ENCODE measurements at regions of chr3 and their contacts with region 1.

Region 1: DNA sequence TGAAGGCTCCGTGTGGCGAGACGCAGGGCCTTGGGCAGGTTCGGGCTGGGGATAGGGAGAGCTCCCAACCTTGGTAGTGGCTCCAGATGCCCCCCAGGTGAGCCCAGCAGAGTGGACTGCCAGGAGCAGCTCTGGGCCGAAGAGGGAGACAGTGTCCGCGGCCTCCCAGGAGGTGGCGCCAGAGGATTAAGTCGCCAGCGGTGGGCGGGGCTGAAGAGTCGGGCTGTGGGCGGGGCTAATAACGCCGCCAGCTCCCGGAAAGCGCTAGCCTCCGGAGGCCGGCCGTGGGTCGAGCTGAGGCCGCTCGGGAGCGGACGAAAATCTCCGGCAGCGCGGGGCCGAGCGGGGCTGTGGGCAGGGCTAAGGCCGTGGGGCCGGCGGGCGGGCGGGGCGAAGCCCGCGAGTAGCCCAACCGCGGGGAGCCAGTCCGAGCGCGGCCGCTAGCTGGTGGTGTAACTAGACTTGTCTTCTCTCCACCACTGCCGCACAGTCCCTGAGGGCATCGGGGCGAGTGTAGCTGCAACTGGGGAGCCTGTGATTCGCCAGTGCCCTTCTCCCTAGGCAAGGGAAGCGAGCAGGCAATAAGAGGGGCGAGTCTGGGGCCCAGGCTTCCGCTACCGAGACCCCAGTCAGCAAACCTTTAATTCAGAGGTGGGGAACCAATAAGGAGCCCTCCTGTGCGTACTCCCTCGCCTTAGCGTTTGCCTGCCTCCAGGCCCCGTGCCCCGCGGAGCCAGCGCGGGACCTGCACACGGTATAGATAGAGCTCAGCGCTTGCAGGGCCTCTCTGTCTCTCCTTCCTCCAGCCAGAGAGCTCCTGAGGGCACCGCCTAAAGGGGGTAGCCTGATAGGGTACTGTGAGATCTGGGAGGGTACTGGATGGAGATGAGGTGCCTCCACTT is 14.4 kb upstream of the BSN start:
- DNase-seq: peak; percentile 93
- H3K4me3 Mint-ChIP-seq: peak overlapping the region; percentile 71
- H3K27ac Mint-ChIP-seq: no peak overlapping the region
- H3K4me1 Mint-ChIP-seq: peaks cover 5% of the 10 kb centered on the region
- H3K27me3 Mint-ChIP-seq: peaks cover 22% of the 10 kb centered on the region

Region 2: DNA sequence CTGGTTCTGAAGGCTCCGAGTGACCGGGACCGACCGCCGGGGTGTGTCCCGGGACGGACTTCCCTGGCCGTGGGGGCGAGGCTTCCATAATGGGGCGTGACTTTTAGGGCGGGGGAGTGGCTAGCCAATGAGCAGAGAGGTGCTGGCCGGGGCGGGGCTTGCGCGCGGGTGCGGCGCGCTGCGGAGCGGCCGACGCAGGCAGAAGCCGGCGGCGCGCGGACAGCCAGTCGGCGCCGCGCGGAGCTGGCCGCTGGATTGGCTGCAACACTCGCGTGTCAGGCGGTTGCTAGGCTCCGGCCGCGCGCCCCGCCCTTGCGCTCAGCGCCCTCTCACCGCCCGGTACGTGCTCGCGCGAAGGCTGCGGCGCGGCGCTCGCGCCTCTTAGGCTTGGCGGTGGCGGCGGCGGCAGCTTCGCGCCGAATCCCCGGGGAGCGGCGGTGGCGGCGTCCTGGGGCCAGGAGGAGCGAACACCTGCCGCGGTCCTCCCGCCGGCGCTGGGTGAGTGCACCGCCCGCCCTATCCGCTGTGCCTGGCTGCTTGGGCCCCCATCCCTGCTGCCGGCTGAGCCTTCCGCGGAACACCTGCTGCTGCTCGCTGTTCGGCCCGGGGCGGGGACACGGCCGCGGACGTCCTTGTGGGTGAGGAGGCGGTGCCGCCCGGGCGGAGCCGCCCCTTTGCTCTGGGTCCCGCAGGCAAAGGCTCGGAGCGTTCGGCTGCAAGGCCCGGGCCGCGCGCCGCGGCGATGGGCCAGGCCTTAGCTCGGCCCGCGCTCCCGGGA is 69.8 kb before region 1 on chr3 and contains the start of gene DAG1:
- CTCF ChIA-PET with region 1: no interaction called
- DNase-seq: peak; percentile 98
- H3K4me3 Mint-ChIP-seq: peak within 1 kb of the TSS; percentile 90
- H3K27ac Mint-ChIP-seq: peak within 1 kb of the TSS; percentile 96
- H3K4me1 Mint-ChIP-seq: peaks cover 28% of the 10 kb centered on the region
- H3K27me3 Mint-ChIP-seq: no peaks in the 10 kb centered on the region

Region 3: DNA sequence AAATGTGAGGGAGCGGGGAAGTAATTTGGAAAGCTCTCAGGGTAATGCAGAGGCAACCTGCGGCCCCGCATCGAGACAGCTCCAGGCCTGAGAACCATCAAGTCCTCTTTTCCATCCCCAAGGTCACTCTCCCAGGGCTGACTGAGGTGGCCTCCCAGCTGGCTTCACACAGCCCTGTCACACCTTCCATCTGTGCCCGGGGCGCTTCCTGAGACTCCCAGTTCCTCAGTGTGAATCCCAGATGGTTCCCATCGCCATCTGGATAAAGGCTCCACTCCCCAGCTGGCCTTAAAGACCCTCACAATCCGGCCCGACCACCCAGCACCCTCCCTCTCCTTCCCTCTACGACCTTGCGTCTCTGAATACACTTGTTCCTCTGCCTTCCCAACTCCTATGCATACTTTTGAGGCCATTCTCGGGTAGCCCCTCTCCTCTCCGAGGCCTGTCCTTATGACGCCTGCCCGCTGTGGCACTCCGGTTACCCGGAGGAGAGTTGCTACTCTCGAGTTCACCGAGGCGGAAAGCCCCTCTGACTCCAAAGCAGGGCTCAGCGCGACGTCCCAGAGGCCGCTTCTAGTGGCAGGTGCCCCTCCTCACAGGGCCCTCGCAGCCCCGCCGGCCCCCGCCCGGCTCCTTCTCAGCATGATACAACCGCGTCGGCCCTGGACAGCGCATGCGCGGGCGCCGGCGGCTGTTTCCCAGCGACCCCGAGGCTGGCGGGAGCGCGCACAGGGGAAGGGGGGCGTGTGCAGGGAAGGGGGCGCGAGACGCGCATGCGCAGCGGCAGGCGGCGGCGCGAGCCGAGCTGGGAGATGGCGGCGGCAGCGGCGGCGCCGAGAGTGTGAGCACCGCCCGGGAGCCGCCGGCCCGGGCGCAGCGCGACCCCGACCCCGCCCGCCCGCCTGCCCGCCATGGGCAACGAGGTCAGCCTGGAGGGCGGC is 14.1 kb after region 1 on chr3 and contains the start of gene BSN:
- CTCF ChIA-PET with region 1: interaction called, 11 read pairs
- DNase-seq: peak; percentile 89
- H3K4me3 Mint-ChIP-seq: peak within 1 kb of the TSS; percentile 75
- H3K27ac Mint-ChIP-seq: no peak within 1 kb of the TSS
- H3K4me1 Mint-ChIP-seq: peaks cover 26% of the 10 kb centered on the region
- H3K27me3 Mint-ChIP-seq: peaks cover 65% of the 10 kb centered on the region

Region 4: DNA sequence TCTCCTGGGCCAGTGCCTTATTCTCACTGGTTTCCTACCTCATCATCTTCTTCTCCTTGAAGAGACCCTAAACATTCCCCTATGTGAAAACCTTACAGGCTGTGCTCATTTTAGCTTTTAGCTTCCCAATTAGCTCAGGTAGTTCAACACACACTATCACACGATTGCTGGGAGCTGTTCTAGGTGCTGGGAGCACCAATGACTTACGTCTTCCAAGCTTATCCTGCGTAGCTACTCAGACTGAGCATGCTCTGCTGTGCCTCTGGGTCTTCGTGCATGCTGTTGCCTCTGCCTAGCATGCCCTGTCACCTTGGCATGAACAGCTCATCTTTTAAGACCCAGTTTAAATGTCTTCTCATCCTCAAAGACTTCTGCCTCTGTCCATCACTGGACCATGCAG is 78.5 kb after region 1 on chr3:
- CTCF ChIA-PET with region 1: no interaction called
- DNase-seq: no peak
- H3K4me3 Mint-ChIP-seq: no peak overlapping the region
- H3K27ac Mint-ChIP-seq: no peak overlapping the region
- H3K4me1 Mint-ChIP-seq: no peaks in the 10 kb centered on the region
- H3K27me3 Mint-ChIP-seq: peaks cover 37% of the 10 kb centered on the region

Region 5: GRCh38 chr3:49629866-49630265 is 90.0 kb after region 1 on chr3:
- CTCF ChIA-PET with region 1: no interaction called
- DNase-seq: no peak
- H3K4me3 Mint-ChIP-seq: no peak overlapping the region
- H3K27ac Mint-ChIP-seq: no peak overlapping the region
- H3K4me1 Mint-ChIP-seq: peaks cover 3% of the 10 kb centered on the region
- H3K27me3 Mint-ChIP-seq: peaks cover 48% of the 10 kb centered on the region

Region 6: DNA sequence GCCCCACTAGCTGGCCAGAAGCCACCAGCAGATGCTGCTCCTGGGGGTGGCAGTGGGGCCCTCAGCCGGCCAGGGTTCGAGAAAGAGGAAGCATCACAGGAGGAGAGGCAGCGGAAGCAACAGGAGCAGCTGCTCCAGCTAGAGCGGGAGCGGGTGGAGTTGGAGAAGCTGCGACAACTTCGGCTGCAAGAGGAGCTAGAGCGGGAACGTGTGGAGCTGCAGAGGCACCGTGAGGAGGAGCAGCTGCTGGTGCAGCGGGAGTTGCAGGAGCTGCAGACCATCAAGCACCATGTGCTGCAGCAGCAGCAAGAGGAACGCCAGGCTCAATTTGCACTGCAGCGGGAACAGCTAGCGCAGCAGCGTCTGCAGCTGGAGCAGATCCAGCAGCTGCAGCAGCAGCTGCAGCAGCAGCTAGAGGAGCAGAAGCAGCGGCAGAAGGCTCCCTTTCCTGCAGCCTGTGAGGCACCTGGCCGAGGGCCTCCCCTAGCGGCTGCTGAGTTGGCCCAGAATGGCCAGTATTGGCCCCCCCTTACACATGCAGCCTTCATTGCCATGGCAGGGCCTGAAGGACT is 116.7 kb after region 1 on chr3:
- CTCF ChIA-PET with region 1: interaction called, 10 read pairs
- DNase-seq: no peak
- H3K4me3 Mint-ChIP-seq: no peak overlapping the region
- H3K27ac Mint-ChIP-seq: no peak overlapping the region
- H3K4me1 Mint-ChIP-seq: no peaks in the 10 kb centered on the region
- H3K27me3 Mint-ChIP-seq: peaks cover 10% of the 10 kb centered on the region

Region 7: GRCh38 chr3:49665822-49666519 is 126.1 kb after region 1 on chr3:
- CTCF ChIA-PET with region 1: interaction called, 155 read pairs
- DNase-seq: no peak
- H3K4me3 Mint-ChIP-seq: no peak overlapping the region
- H3K27ac Mint-ChIP-seq: no peak overlapping the region
- H3K4me1 Mint-ChIP-seq: no peaks in the 10 kb centered on the region
- H3K27me3 Mint-ChIP-seq: peaks cover 9% of the 10 kb centered on the region

Region 8: DNA sequence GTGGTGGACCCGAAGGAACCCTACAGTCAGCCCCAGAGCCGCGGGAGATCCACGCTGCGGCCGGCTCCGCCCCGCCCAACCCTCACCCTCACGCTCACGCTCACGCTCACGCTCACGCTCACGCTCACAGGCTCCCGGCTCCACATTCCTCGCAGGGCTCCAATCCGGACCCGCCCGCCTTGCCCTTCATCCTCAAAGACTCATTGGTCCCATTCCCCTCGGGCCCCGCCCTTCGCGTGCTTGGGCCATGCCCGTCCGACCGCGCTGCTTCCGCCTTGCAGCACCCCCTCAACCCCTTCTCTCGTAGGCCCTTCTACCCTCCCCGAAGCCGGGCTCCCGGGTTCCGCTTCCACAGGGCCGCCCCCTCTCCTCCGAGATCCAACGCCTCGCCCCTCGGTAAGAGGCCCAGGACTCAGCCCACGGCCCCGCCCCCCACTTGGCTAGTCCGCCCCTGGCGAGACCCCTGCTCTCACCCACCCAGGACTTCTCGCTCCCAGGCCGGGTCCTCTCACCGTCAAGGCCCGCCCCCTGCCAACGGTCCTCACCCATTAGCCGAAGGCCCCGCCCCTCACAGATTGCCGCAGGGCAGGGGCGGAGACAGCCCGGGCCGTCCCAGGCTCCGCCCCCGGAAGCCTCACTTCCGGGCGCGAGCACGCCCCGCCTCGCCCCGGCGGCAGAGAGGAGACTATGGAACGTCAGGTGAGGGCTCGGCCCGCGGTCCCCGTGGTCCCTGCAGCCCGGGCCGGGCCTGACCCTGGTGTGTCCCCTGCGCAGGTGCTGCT is 134.0 kb after region 1 on chr3 and contains the start of gene APEH:
- CTCF ChIA-PET with region 1: interaction called, 155 read pairs
- DNase-seq: peak; percentile 99
- H3K4me3 Mint-ChIP-seq: peak within 1 kb of the TSS; percentile 93
- H3K27ac Mint-ChIP-seq: peak within 1 kb of the TSS; percentile 99
- H3K4me1 Mint-ChIP-seq: peaks cover 34% of the 10 kb centered on the region
- H3K27me3 Mint-ChIP-seq: peaks cover 14% of the 10 kb centered on the region

Region 9: GRCh38 chr3:49703443-49703927 is 163.6 kb after region 1 on chr3:
- CTCF ChIA-PET with region 1: interaction called, 12 read pairs
- DNase-seq: peak; percentile 81
- H3K4me3 Mint-ChIP-seq: no peak overlapping the region
- H3K27ac Mint-ChIP-seq: no peak overlapping the region
- H3K4me1 Mint-ChIP-seq: no peaks in the 10 kb centered on the region
- H3K27me3 Mint-ChIP-seq: no peaks in the 10 kb centered on the region

Region 10: GRCh38 chr3:49839193-49839809 is 299.4 kb after region 1 on chr3:
- CTCF ChIA-PET with region 1: interaction called, 13 read pairs
- DNase-seq: peak; percentile 90
- H3K4me3 Mint-ChIP-seq: no peak overlapping the region
- H3K27ac Mint-ChIP-seq: no peak overlapping the region
- H3K4me1 Mint-ChIP-seq: no peaks in the 10 kb centered on the region
- H3K27me3 Mint-ChIP-seq: no peaks in the 10 kb centered on the region

Region 11: GRCh38 chr3:49966230-49966942 is 426.5 kb after region 1 on chr3:
- CTCF ChIA-PET with region 1: no interaction called
- DNase-seq: no peak
- H3K4me3 Mint-ChIP-seq: no peak overlapping the region
- H3K27ac Mint-ChIP-seq: no peak overlapping the region
- H3K4me1 Mint-ChIP-seq: peaks cover 2% of the 10 kb centered on the region
- H3K27me3 Mint-ChIP-seq: no peaks in the 10 kb centered on the region